Activated T-helper 1 cell treated with anti-CD3 and anti-CD28 coated beads, Interleukin-12 subunit alpha, Interleukin-12 subunit beta, Interleukin-2, Interleukin-4 antibody, amounts not matched to agents 30 ng/mL and 10 ng/mL and 1 ng/mL, durations not matched to agents 14 hours and 24 hours and 36 hours (primary cell): ENCODE measurements at regions of chr3 and their contacts with region 1.

Region 1: GRCh38 chr3:57755668-57756527 is at the start of gene SLMAP:
- DNase-seq: peak; percentile 95
- H3K4me3 Mint-ChIP-seq: peak within 1 kb of the TSS; percentile 98
- H3K27ac Mint-ChIP-seq: peak within 1 kb of the TSS; percentile 97
- H3K4me1 Mint-ChIP-seq: peaks cover 39% of the 10 kb centered on the region
- H3K27me3 Mint-ChIP-seq: peaks cover 6% of the 10 kb centered on the region
- total RNA-seq, gene SLMAP: 60.3 and 64.0 TPM in 2 replicates

Region 2: GRCh38 chr3:57675530-57675929 is 80.4 kb before region 1 on chr3:
- intact Hi-C with region 1: loop called (anchors 1 kb)
- DNase-seq: no peak
- H3K4me3 Mint-ChIP-seq: no peak overlapping the region
- H3K27ac Mint-ChIP-seq: no peak overlapping the region
- H3K4me1 Mint-ChIP-seq: peaks cover 48% of the 10 kb centered on the region
- H3K27me3 Mint-ChIP-seq: no peaks in the 10 kb centered on the region

Region 3: GRCh38 chr3:57787867-57788623 is 32.1 kb after region 1 on chr3:
- intact Hi-C with region 1: loop called (anchors 1 kb)
- DNase-seq: no peak
- H3K4me3 Mint-ChIP-seq: no peak overlapping the region
- H3K27ac Mint-ChIP-seq: no peak overlapping the region
- H3K4me1 Mint-ChIP-seq: peaks cover 6% of the 10 kb centered on the region
- H3K27me3 Mint-ChIP-seq: no peaks in the 10 kb centered on the region

Region 4: DNA sequence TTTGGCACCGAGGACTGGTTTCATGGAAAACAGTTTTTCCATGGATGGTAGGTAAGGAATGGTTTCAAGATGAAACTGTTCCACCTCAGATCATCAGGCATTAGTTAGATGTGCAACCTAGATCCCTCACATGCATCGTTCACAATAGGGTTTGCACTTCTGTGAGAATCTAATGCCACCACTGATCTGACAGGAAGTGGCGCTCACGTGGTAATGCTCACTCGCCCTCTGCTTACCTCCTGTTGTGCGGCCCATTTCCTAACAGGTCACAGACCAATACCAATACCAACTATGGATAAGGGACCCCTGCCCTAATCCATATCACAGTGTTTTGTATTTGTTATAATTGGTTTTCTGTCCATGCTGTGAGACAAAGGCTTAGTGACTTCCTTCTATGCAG is 59.1 kb after region 1 on chr3:
- intact Hi-C with region 1: loop called (anchors 2 kb)
- DNase-seq: peak; percentile 9
- H3K4me3 Mint-ChIP-seq: no peak overlapping the region
- H3K27ac Mint-ChIP-seq: no peak overlapping the region
- H3K4me1 Mint-ChIP-seq: peaks cover 18% of the 10 kb centered on the region
- H3K27me3 Mint-ChIP-seq: no peaks in the 10 kb centered on the region

Region 5: DNA sequence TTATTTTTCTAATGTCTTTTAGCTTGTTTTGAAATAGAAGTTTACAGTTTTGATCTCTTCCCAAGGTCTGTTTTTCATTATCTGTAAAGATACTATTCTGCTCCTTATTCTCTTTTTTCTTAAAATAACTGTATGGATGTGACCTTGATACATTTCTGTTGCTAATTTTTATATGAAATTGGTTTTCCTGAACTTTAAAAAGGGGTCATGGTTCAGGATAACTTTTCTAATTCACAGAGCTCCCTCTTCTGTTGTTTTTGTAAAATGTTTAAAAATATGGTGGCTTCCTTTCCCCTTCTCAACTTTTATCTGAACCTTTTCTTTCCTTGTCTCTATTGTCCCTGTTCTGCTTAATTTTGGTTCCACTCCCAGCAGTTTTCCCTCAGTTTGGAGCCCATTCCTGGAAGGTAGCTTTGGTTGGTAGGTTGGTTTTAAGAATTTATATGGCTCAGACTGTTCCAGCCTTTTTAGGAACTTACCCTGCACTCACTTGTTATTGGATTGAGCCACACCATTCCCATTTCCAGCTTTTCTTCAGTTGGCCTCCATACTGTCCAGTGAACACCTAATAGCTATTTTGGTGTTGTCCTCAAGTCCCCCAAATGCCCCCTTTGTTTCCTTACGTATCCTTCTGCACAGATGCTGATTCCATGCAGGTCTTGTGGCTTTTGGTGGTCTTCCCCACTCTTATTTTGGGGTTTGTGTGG is 70.5 kb after region 1 on chr3:
- intact Hi-C with region 1: no loop called
- DNase-seq: no peak
- H3K4me3 Mint-ChIP-seq: no peak overlapping the region
- H3K27ac Mint-ChIP-seq: no peak overlapping the region
- H3K4me1 Mint-ChIP-seq: no peaks in the 10 kb centered on the region
- H3K27me3 Mint-ChIP-seq: no peaks in the 10 kb centered on the region